ENCODE measurements at regions of chr3 and their contacts with region 1.

Region 1: DNA sequence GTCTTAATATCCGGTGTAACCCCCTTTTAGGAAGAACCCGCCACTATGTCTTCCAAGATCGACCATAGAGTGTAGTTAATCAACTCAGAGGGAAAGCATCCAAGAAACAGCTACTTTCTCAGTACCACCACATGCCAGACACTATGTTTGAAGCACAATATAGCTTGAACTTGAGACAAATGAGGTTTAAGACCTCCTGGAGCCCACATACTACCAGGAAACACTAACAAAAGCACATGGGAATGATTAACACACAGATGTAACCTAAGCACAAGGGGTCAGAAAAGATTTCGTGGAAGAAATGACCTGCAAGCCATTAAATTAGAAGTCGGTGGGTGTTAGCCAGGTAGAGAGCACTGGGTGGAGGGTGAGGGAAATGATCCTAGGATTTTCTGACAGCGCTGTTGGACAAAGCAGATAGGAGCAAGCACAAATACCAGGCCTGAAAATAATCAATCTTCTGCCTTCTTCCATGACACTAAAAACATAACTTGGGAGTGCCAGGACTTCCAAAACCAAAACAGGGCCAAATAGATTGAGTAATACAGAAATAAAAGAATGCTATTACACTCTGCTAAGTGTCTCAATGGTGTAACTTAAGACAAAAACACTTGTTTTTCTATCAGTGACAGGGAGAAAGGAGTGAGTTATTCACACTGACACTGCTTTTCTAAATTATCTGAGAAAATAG is 213.7 kb downstream of the FOXP1 start:
- DNase-seq: no peak
- H3K4me3 ChIP-seq: no peak overlapping the region
- H3K27ac ChIP-seq: no peak overlapping the region
- H3K4me1 ChIP-seq: no peaks in the 10 kb centered on the region
- H3K27me3 ChIP-seq: no peaks in the 10 kb centered on the region
- CTCF ChIP-seq: no peak
- POLR2A ChIP-seq: no peak

Region 2: GRCh38 chr3:71317749-71318457 is 51.9 kb before region 1 on chr3:
- intact Hi-C with region 1: loop called (anchors 5 kb)
- DNase-seq: no peak
- H3K4me3 ChIP-seq: no peak overlapping the region
- H3K27ac ChIP-seq: no peak overlapping the region
- H3K4me1 ChIP-seq: no peaks in the 10 kb centered on the region
- H3K27me3 ChIP-seq: no peaks in the 10 kb centered on the region
- CTCF ChIP-seq: no peak
- POLR2A ChIP-seq: no peak

Region 3: GRCh38 chr3:71710906-71711494 is 341.2 kb after region 1 on chr3:
- intact Hi-C with region 1: no loop called
- DNase-seq: no peak
- H3K4me3 ChIP-seq: no peak overlapping the region
- H3K27ac ChIP-seq: no peak overlapping the region
- H3K4me1 ChIP-seq: no peaks in the 10 kb centered on the region
- H3K27me3 ChIP-seq: no peaks in the 10 kb centered on the region
- CTCF ChIP-seq: peak; percentile 35 to 78 (median 60)
- POLR2A ChIP-seq: no peak